Right ventricle myocardium inferior (tissue), 1 donor: ENCODE measurements at regions of chr1 and their contacts with region 1.

Region 1: GRCh38 chr1:168637350-168637991 is 61.1 kb downstream of the XCL1 start:
- DNase-seq: no peak
- ATAC-seq: no peak

Region 2: GRCh38 chr1:168719306-168720111 is 82.0 kb after region 1 on chr1:
- intact Hi-C with region 1: loop called (anchors 2 kb)
- DNase-seq: no peak
- ATAC-seq: no peak

Region 3: DNA sequence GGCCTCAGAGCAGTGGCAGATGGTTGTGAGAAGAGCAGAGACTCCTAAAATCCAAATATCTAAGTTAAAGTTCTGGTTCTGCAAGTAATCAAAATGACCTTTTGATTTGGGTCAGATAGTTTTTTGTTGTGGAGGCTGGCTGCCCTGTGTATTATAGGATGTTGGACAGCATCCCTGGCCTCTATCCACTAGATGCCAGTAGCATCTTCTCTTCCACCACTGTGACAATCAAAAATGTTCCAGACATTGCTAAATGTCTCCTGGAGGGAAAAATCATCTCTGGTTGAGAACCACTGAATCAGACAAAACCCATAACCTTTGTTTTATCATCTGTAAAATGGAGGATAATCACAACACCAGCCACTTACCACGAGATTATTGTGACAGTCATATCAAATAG is 97.5 kb after region 1 on chr1:
- intact Hi-C with region 1: loop called (anchors 5 kb)
- DNase-seq: no peak
- ATAC-seq: no peak

Region 4: DNA sequence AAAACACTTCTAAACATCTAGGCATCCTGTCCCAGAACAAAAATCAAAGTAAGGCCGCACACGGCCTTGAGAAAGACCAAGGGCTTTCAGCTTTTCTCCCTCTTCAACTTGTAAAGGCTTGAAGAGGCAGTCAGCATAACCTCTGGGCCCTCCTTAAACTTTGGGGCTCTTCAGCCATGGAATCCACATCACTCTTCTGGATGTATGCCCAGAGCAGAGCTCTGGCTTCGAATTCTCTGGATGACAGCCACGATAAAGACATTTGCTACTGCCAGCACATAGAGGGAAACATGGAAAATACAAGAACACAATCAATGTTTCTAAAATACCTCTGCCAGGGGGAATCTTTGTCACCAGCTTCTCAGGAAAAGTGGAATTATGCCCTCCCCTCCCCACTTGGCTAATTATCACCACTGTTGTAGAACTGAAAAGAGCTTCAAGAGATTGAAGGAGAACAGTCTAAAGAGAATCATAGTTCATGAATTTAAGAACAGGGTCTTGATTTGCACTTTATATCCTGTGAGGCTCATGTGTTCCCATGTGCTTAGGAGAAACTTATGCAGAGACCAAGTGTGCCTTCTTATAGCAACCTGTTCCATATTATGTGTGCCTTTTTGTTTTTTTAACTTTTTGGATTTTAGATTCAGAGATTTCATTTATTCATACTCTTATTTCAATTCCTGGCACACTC is 130.6 kb after region 1 on chr1:
- intact Hi-C with region 1: loop called (anchors 2 kb)
- DNase-seq: no peak
- ATAC-seq: peak; percentile 91

Region 5: DNA sequence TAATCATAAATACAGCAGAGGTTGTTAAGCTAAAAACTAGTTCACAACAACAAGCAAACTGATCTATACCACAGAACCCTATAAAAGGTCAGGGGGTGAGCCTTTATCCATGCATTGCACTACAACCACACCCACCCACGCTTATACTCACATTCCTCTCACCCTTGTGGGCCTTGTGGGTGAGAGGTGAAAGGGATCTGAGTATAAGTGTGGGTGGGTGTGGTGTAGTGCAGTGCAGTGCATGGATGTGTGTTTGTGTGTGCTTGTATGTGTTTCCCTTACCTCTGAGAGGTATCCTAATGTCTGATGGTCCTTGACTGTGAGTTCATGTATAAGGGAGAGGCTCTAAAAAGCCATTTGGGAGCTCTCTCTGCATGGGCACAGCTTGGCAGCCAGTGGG is 186.9 kb after region 1 on chr1:
- intact Hi-C with region 1: loop called (anchors 5 kb)
- DNase-seq: no peak
- ATAC-seq: peak; percentile 54